Common myeloid progenitor, CD34-positive (primary cell): ENCODE measurements at regions of chr17 and their contacts with region 1.

Region 1: GRCh38 chr17:35022536-35023063 is 40.9 kb downstream of the RFFL start:
- DNase-seq: peak; percentile 50 to 79 (median 72)
- H3K4me3 ChIP-seq: peak overlapping the region in 1 of 7 experiments; percentile 12
- H3K27ac ChIP-seq: no peak overlapping the region
- H3K4me1 ChIP-seq: peaks cover 2 to 15% (median 12%) of the 10 kb centered on the region in 4 experiments
- H3K27me3 ChIP-seq: no peaks in the 10 kb centered on the region

Region 2: DNA sequence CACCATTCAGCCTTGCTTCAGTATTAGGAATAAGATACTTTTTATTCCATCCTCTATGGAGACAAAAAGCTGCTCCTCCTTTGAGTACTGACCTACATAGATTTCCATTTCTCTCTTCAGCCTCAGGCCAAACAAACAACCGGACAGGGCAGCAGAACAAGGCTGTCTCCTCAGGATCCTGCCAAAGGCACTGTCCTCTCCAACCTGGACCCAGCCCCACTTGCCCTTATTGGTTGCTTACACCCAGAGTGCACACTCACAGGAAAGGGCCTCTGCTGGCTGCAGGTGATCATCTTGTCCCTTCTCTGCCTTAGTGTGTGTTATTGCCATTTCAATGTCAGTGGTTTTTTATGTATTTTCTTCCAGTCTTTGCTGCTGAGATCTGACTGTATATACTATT is 15.6 kb before region 1 on chr17:
- CTCF ChIA-PET with region 1: interaction called, 19 read pairs
- POLR2A ChIA-PET with region 1: no interaction called
- DNase-seq: no peak
- H3K4me3 ChIP-seq: no peak overlapping the region
- H3K27ac ChIP-seq: no peak overlapping the region
- H3K4me1 ChIP-seq: no peaks in the 10 kb centered on the region
- H3K27me3 ChIP-seq: no peaks in the 10 kb centered on the region

Region 3: DNA sequence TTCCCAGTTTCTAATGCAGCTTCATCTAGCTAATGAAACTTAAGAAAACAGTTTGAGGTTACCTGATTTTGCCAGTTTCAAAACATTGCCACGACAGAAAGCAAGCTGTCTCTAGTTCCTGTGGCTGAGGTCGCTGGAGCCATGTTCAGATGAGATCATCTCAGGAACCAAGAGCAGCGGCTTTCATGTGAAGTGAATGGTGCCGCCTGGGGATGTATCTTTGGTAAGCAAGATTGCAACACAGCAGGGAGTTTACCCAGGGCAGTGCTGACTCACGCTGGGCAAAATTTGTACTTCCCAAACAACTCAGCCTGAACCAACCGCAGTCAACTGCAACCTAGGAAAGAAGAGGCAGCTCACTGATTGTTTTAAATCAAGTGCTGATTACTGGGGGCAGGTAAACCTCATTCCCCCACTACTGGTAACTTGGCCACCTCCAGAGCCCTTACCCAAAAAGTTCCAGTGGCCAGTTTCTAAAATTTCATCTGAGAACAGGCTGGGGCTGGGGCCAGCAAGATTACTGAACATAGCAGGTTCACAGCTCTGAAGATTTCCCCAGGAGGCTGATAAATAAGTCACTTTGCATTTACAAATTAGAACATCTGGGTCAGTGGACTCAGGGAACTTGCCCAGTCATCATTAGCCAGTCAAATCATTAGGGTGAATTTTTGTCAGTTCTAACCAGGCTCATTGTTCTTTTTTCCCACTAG is 41.1 kb after region 1 on chr17 and contains the start of gene RFFL:
- CTCF ChIA-PET with region 1: interaction called, 11 read pairs
- POLR2A ChIA-PET with region 1: interaction called, 7 read pairs
- DNase-seq: peak; percentile 97 to 99 (median 98)
- H3K4me3 ChIP-seq: peak within 1 kb of the TSS in 6 of 7 experiments; percentile 38 to 74 (median 54)
- H3K27ac ChIP-seq: peak within 1 kb of the TSS; percentile 77 to 88
- H3K4me1 ChIP-seq: peaks cover 17 to 53% (median 25%) of the 10 kb centered on the region in 4 experiments
- H3K27me3 ChIP-seq: no peaks in the 10 kb centered on the region

Region 4: GRCh38 chr17:35088881-35089585 is 66.4 kb after region 1 on chr17:
- CTCF ChIA-PET with region 1: interaction called, 16 read pairs
- POLR2A ChIA-PET with region 1: interaction called, 6 read pairs
- DNase-seq: peak; percentile 78 to 90 (median 89)
- H3K4me3 ChIP-seq: peak overlapping the region; percentile 58 to 95 (median 90)
- H3K27ac ChIP-seq: peak overlapping the region; percentile 72 to 84
- H3K4me1 ChIP-seq: peaks cover 12 to 35% (median 27%) of the 10 kb centered on the region in 4 experiments
- H3K27me3 ChIP-seq: no peaks in the 10 kb centered on the region